IMR-90 (cell line): ENCODE measurements at regions of chr5 and their contacts with region 1.

Region 1: GRCh38 chr5:169805527-169805934 is 168.5 kb downstream of the DOCK2 start:
- DNase-seq: peak; percentile 61
- ATAC-seq: no peak
- H3K4me3 ChIP-seq: no peak overlapping the region
- H3K27ac ChIP-seq: peak overlapping the region; percentile 80
- H3K4me1 ChIP-seq: peaks cover 16% of the 10 kb centered on the region
- H3K27me3 ChIP-seq: no peaks in the 10 kb centered on the region
- CTCF ChIP-seq: no peak
- POLR2A ChIP-seq: no peak
- RAD21 ChIP-seq: no peak

Region 2: DNA sequence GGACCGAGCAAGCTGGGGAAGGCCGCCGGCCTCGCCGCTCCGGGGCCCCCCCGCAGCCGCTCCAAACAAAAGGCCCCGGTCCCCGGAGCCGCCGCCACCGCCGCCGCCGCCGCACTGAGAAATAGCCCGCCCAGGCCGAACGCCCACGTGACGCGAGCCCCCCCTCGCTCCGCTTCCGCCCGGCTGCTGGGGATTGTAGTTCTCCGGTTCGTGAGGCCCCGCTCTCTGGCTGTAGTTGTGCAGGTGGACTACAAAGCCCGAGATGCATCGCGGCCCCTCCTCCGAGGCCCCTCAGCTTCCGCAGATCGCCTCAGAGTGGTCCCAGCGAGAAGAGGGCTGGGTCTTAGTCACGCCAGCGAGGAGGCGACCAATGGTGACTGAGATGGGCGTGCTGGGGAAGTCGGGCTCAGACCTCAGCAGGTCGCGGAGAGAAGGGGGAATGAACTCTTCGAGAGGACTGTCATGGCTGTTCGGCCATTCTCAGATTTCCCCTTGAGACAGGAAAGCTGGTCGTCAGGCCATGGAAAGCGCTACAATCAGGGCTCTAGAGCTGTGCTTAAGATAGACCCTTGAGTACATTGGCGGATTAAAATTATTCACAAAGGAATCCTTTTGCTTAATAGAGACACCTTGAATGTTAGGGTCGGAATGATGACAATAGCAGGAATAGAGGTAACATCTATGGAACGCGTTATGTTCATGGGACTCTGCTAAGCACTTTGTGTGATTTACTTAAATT is 1225.9 kb before region 1 on chr5:
- CTCF ChIA-PET with region 1: no interaction called
- POLR2A ChIA-PET with region 1: no interaction called
- dilution Hi-C with region 1: no loop called
- in situ Hi-C with region 1: no loop called
- intact Hi-C with region 1: loop called (anchors 10 kb)
- DNase-seq: peak; percentile 99
- ATAC-seq: peak; percentile 97
- H3K4me3 ChIP-seq: peak overlapping the region; percentile 97
- H3K27ac ChIP-seq: peak overlapping the region; percentile 84
- H3K4me1 ChIP-seq: no peaks in the 10 kb centered on the region
- H3K27me3 ChIP-seq: no peaks in the 10 kb centered on the region
- CTCF ChIP-seq: no peak
- POLR2A ChIP-seq: peak; percentile 34
- RAD21 ChIP-seq: no peak

Region 3: DNA sequence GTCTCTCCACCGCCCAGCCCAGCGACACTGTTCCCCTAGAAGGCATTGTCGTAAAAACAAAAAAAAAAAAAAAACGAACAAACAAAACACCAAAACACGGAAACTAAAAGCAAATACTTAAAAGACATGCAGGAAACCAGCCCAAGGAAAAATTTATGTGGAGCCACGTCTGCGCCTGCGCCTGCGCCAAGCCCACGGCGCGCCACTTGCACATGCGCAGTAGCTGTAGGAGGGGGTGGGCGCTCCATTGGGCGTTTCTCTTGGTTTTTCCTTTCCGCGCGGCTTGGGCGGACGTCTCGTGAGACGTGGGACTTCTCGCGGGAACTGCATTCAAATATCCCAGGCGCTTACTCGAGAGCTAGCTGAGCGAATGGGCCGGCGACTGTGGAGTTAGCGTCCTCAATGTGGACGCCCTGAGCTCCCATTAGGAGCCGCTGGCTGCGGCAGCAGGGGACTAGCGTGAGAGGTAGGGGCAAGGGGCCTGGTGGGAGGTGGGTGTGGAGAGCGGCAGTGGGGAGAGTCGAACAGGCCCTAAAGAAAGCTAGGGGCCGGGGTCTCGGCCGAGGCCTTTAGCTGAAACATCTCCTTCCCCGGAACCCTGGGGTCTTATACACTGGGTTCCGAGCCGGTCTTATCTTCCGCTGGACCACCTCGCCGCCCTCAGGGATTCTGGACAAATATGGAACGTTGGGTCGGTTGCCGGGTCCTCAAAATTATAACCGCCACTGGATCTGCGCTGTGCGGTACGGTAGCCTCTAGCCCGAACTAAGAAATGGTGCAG is 221.9 kb before region 1 on chr5 and contains the start of gene SPDL1:
- CTCF ChIA-PET with region 1: no interaction called
- POLR2A ChIA-PET with region 1: no interaction called
- dilution Hi-C with region 1: no loop called
- in situ Hi-C with region 1: no loop called
- intact Hi-C with region 1: loop called (anchors 10 kb)
- DNase-seq: peak; percentile 95
- ATAC-seq: peak; percentile 95
- H3K4me3 ChIP-seq: peak within 1 kb of the TSS; percentile 66
- H3K27ac ChIP-seq: peak within 1 kb of the TSS; percentile 72
- H3K4me1 ChIP-seq: peaks cover 2% of the 10 kb centered on the region; the same call in 1 of the 2 replicates
- H3K27me3 ChIP-seq: no peaks in the 10 kb centered on the region
- CTCF ChIP-seq: no peak
- POLR2A ChIP-seq: peak; percentile 87
- RAD21 ChIP-seq: no peak
- total RNA-seq, gene SPDL1: 18.8 and 48.6 TPM in 2 replicates

Region 4: GRCh38 chr5:169701910-169702451 is 103.5 kb before region 1 on chr5:
- CTCF ChIA-PET with region 1: interaction called, 4 read pairs
- POLR2A ChIA-PET with region 1: interaction called, 4 read pairs
- dilution Hi-C with region 1: no loop called
- in situ Hi-C with region 1: no loop called
- intact Hi-C with region 1: loop called (anchors 2 kb)
- DNase-seq: peak; percentile 64
- ATAC-seq: peak; percentile 72
- H3K4me3 ChIP-seq: no peak overlapping the region
- H3K27ac ChIP-seq: no peak overlapping the region
- H3K4me1 ChIP-seq: peaks cover 24% of the 10 kb centered on the region
- H3K27me3 ChIP-seq: no peaks in the 10 kb centered on the region
- CTCF ChIP-seq: peak; percentile 80
- POLR2A ChIP-seq: no peak
- RAD21 ChIP-seq: peak; percentile 78

Region 5: DNA sequence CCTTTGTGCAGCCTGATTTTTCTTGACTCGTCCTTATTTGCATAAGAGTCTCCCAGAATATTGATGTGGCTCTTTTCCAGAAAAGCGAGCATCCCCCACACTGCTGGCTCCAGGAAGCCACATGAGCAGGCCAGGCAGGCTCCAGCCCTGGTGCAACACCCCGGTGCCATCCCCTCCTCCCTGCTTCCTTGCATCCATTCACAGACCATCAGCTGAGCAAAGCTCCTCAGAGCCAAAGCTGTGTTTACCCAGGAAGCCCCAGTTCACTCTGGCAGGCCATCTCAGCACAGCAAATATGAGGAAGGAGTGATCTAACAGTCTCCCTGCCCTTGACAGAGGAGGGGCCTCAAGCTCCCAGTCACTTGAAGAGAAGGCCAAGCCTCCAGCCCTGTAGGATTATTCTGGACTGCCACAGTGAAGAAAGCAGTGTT is 140.3 kb after region 1 on chr5:
- CTCF ChIA-PET with region 1: interaction called, 3 read pairs
- POLR2A ChIA-PET with region 1: no interaction called
- dilution Hi-C with region 1: no loop called
- in situ Hi-C with region 1: no loop called
- intact Hi-C with region 1: loop called (anchors 10 kb)
- DNase-seq: peak; percentile 95
- ATAC-seq: peak; percentile 95
- H3K4me3 ChIP-seq: peak overlapping the region; percentile 2; the same call in 1 of the 2 replicates
- H3K27ac ChIP-seq: peak overlapping the region; percentile 91
- H3K4me1 ChIP-seq: peaks cover 14% of the 10 kb centered on the region
- H3K27me3 ChIP-seq: no peaks in the 10 kb centered on the region
- CTCF ChIP-seq: no peak
- POLR2A ChIP-seq: no peak
- RAD21 ChIP-seq: peak; percentile 23; the same call in 1 of the 2 replicates